CD4-positive, alpha-beta T cell (primary cell): ENCODE measurements at regions of chr11 and their contacts with region 1.

Region 1: GRCh38 chr11:128506999-128507611 is 80.3 kb downstream of the ETS1 start:
- DNase-seq: peak in 7 of 14 experiments; percentile 38 to 62 (median 53)
- ATAC-seq: peak; percentile 28
- H3K4me3 ChIP-seq: peak overlapping the region; percentile 89
- H3K4me3 Mint-ChIP-seq: peak overlapping the region; percentile 93
- H3K27ac ChIP-seq: peak overlapping the region; percentile 68 to 93
- H3K27ac Mint-ChIP-seq: peak overlapping the region; percentile 99
- H3K4me1 ChIP-seq: peaks cover 86% of the 10 kb centered on the region
- H3K4me1 Mint-ChIP-seq: peaks cover 100% of the 10 kb centered on the region
- H3K27me3 ChIP-seq: no peaks in the 10 kb centered on the region
- H3K27me3 Mint-ChIP-seq: no peaks in the 10 kb centered on the region
- CTCF ChIP-seq: no peak

Region 2: GRCh38 chr11:128172046-128172878 is 334.8 kb before region 1 on chr11:
- CTCF ChIA-PET with region 1: interaction called, 3 read pairs
- POLR2A ChIA-PET with region 1: no interaction called
- intact Hi-C with region 1: loop called in 1 of 2 experiments (anchors 5 kb)
- DNase-seq: peak; percentile 73 to 92 (median 84)
- ATAC-seq: peak; percentile 83
- H3K4me3 ChIP-seq: no peak overlapping the region
- H3K4me3 Mint-ChIP-seq: no peak overlapping the region
- H3K27ac ChIP-seq: no peak overlapping the region
- H3K27ac Mint-ChIP-seq: no peak overlapping the region
- H3K4me1 ChIP-seq: no peaks in the 10 kb centered on the region
- H3K4me1 Mint-ChIP-seq: peaks cover 6% of the 10 kb centered on the region
- H3K27me3 ChIP-seq: no peaks in the 10 kb centered on the region
- H3K27me3 Mint-ChIP-seq: no peaks in the 10 kb centered on the region
- CTCF ChIP-seq: peak; percentile 91

Region 3: DNA sequence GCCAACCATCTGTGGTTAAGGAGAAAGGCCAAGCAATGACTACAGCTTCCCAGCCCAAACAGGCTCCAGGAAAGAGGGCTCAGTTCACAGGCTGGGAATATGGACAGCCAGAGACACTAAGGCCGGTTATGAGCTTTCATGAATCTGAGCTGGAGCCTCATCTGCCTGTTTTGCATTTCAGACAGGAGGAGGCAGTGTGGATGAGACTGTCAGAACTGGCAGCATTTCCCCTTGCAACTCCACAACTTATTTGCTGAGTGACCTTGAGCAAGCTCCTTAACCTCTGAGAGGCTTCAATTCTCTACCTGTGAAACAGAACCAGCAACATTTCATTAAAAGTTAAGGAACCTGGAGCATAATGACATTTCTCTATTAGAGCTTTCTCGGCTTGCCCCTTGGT is 183.7 kb before region 1 on chr11:
- CTCF ChIA-PET with region 1: interaction called, 7 read pairs
- POLR2A ChIA-PET with region 1: interaction called, 10 read pairs
- intact Hi-C with region 1: loop called in 1 of 2 experiments (anchors 1 kb)
- DNase-seq: peak in 6 of 14 experiments; percentile 37 to 83 (median 66)
- ATAC-seq: peak; percentile 10
- H3K4me3 ChIP-seq: no peak overlapping the region
- H3K4me3 Mint-ChIP-seq: peak overlapping the region; percentile 47
- H3K27ac ChIP-seq: peak overlapping the region; percentile 89 to 91
- H3K27ac Mint-ChIP-seq: peak overlapping the region; percentile 93
- H3K4me1 ChIP-seq: peaks cover 85% of the 10 kb centered on the region
- H3K4me1 Mint-ChIP-seq: peaks cover 84% of the 10 kb centered on the region
- H3K27me3 ChIP-seq: no peaks in the 10 kb centered on the region
- H3K27me3 Mint-ChIP-seq: no peaks in the 10 kb centered on the region
- CTCF ChIP-seq: peak; percentile 52

Region 4: DNA sequence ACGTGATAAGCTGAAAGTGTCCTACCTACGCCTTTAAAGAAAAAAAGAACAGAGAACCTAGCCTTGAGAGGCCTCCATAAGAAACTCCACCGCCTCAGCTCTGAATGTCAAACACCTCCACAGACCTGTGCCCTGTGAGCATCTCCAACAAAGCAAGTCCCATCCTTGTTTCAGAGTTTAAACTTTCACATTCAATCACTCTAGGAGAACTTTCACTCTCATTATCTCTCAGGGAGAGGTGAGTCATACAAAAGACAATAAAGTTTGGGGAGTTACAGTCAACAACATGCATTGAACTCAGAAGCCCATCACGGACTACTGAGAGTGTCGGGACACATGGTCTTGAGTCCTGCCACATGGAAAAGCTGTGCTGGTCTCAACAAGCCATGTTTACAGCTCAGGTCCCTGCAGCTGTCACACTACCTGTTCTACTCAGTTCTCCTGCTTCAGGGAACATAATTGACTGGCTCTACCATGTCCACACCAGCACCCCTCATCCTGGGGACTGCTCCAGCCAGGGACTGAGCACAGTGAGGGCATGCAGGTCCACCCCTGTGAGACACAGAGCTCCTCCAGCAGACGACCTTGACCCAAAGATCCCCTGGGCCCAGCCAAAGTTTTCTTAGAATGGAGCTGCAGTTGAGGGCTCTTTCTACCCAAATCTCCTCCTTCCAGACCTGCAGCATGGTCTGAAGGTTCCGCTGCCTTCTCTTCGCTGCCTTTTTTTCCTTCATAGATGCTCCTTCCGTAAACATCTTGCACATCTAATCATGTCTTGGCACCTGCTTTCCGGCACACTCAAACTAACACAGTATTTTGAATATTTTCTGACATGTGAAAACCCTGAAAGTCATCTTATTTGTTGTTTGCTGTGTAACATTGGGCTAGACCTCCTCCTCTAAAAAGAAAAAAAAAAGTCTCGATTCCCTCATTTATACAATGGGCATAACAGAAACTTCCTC is 34.7 kb before region 1 on chr11:
- CTCF ChIA-PET with region 1: interaction called, 26 read pairs
- POLR2A ChIA-PET with region 1: interaction called, 449 read pairs
- intact Hi-C with region 1: loop called in 1 of 2 experiments (anchors 2 kb)
- DNase-seq: peak in 6 of 14 experiments; percentile 41 to 79 (median 64)
- ATAC-seq: peak; percentile 19
- H3K4me3 ChIP-seq: peak overlapping the region; percentile 37
- H3K4me3 Mint-ChIP-seq: peak overlapping the region; percentile 64
- H3K27ac ChIP-seq: peak overlapping the region; percentile 92 to 94
- H3K27ac Mint-ChIP-seq: peak overlapping the region; percentile 99
- H3K4me1 ChIP-seq: peaks cover 90% of the 10 kb centered on the region
- H3K4me1 Mint-ChIP-seq: peaks cover 99% of the 10 kb centered on the region
- H3K27me3 ChIP-seq: no peaks in the 10 kb centered on the region
- H3K27me3 Mint-ChIP-seq: no peaks in the 10 kb centered on the region
- CTCF ChIP-seq: no peak

Region 5: GRCh38 chr11:128624269-128625175 is 117.4 kb after region 1 on chr11:
- CTCF ChIA-PET with region 1: interaction called, 22 read pairs
- POLR2A ChIA-PET with region 1: interaction called, 53 read pairs
- intact Hi-C with region 1: loop called in 1 of 2 experiments (anchors 5 kb)
- DNase-seq: peak; percentile 38 to 89 (median 68)
- ATAC-seq: peak; percentile 69
- H3K4me3 ChIP-seq: peak overlapping the region; percentile 4
- H3K4me3 Mint-ChIP-seq: peak overlapping the region; percentile 80
- H3K27ac ChIP-seq: peak overlapping the region; percentile 78
- H3K27ac Mint-ChIP-seq: peak overlapping the region; percentile 97
- H3K4me1 ChIP-seq: peaks cover 88% of the 10 kb centered on the region
- H3K4me1 Mint-ChIP-seq: peaks cover 98% of the 10 kb centered on the region
- H3K27me3 ChIP-seq: no peaks in the 10 kb centered on the region
- H3K27me3 Mint-ChIP-seq: no peaks in the 10 kb centered on the region
- CTCF ChIP-seq: no peak

Region 6: DNA sequence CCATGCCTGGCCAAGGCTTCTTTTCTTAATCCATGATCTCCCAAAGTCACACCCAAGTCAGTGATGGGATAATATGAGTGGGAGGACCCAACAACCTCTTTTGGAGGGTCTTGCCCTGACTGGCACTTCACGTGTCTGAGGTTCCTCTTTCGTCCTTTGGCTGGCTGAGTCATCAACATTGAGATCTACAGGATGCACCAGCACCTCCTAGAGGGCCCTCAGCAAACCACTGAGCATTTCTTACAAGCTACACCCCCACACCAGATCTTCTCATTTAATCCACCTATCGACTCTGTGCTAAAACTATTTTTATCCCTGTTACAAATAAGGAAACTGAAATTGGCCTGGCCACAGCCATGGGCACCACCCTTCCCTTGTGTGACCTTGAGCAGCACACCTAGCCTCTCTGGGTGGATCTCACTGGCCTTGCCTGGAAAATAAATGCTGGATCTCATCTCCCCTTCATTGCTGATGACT is 250.2 kb after region 1 on chr11:
- CTCF ChIA-PET with region 1: interaction called, 10 read pairs
- POLR2A ChIA-PET with region 1: interaction called, 3 read pairs
- intact Hi-C with region 1: loop called (anchors 10 kb)
- DNase-seq: peak; percentile 40 to 90 (median 60)
- ATAC-seq: peak; percentile 99
- H3K4me3 ChIP-seq: no peak overlapping the region
- H3K4me3 Mint-ChIP-seq: peak overlapping the region; percentile 7
- H3K27ac ChIP-seq: no peak overlapping the region
- H3K27ac Mint-ChIP-seq: peak overlapping the region; percentile 63
- H3K4me1 ChIP-seq: peaks cover 80% of the 10 kb centered on the region
- H3K4me1 Mint-ChIP-seq: peaks cover 93% of the 10 kb centered on the region
- H3K27me3 ChIP-seq: no peaks in the 10 kb centered on the region
- H3K27me3 Mint-ChIP-seq: no peaks in the 10 kb centered on the region
- CTCF ChIP-seq: peak; percentile 74